Activated T-helper 2 cell treated with anti-CD3 and anti-CD28 coated beads, Interferon-gamma antibody, Interleukin-2, Interleukin-4, amounts not matched to agents 10 μg/mL and 5 μg/mL and 100 μg/mL, durations not matched to agents 14 hours and 24 hours and 36 hours (primary cell): ENCODE measurements at regions of chr11 and their contacts with region 1.

Region 1: GRCh38 chr11:236774-237767 is at the start of gene PSMD13:
- DNase-seq: peak; percentile 87
- H3K4me3 Mint-ChIP-seq: peak within 1 kb of the TSS; percentile 96
- H3K27ac Mint-ChIP-seq: peak within 1 kb of the TSS; percentile 100
- H3K4me1 Mint-ChIP-seq: peaks cover 53% of the 10 kb centered on the region
- H3K27me3 Mint-ChIP-seq: no peaks in the 10 kb centered on the region
- total RNA-seq, gene PSMD13: 255 and 258 TPM in 2 replicates

Region 2: GRCh38 chr11:225734-226453 is 11.2 kb before region 1 on chr11:
- intact Hi-C with region 1: no loop called
- DNase-seq: no peak
- H3K4me3 Mint-ChIP-seq: no peak overlapping the region
- H3K27ac Mint-ChIP-seq: no peak overlapping the region
- H3K4me1 Mint-ChIP-seq: peaks cover 10% of the 10 kb centered on the region
- H3K27me3 Mint-ChIP-seq: no peaks in the 10 kb centered on the region

Region 3: GRCh38 chr11:269146-269890 is 32.2 kb after region 1 on chr11:
- intact Hi-C with region 1: loop called (anchors 1 kb)
- DNase-seq: peak; percentile 55
- H3K4me3 Mint-ChIP-seq: peak overlapping the region; percentile 89
- H3K27ac Mint-ChIP-seq: peak overlapping the region; percentile 97
- H3K4me1 Mint-ChIP-seq: peaks cover 34% of the 10 kb centered on the region
- H3K27me3 Mint-ChIP-seq: peaks cover 8% of the 10 kb centered on the region